Heart right ventricle (tissue), 16 donors: ENCODE measurements at regions of chrX and their contacts with region 1.

Region 1: GRCh38 chrX:129637217-129638109 is 17.3 kb downstream of the APLN start:
- DNase-seq: peak; percentile 67 to 72
- ATAC-seq: peak; percentile 46 to 86 (median 70)
- H3K4me3 ChIP-seq: no peak overlapping the region
- H3K27ac ChIP-seq: no peak overlapping the region
- H3K4me1 ChIP-seq: peaks cover 0 to 9% (median 0%) of the 10 kb centered on the region in 9 donors
- H3K27me3 ChIP-seq: no peaks in the 10 kb centered on the region
- CTCF ChIP-seq: peak; percentile 67 to 97 (median 84)

Region 2: GRCh38 chrX:129726307-129727111 is 89.0 kb after region 1 on chrX:
- intact Hi-C with region 1: loop called (anchors 1 to 5 kb)
- DNase-seq: peak; percentile 59 to 64
- ATAC-seq: peak in 7 of 8 donors; percentile 77 to 93 (median 88)
- H3K4me3 ChIP-seq: no peak overlapping the region
- H3K27ac ChIP-seq: no peak overlapping the region
- H3K4me1 ChIP-seq: no peaks in the 10 kb centered on the region
- H3K27me3 ChIP-seq: peaks cover 0 to 12% (median 0%) of the 10 kb centered on the region in 7 donors
- CTCF ChIP-seq: peak; percentile 44 to 78 (median 71)

Region 3: DNA sequence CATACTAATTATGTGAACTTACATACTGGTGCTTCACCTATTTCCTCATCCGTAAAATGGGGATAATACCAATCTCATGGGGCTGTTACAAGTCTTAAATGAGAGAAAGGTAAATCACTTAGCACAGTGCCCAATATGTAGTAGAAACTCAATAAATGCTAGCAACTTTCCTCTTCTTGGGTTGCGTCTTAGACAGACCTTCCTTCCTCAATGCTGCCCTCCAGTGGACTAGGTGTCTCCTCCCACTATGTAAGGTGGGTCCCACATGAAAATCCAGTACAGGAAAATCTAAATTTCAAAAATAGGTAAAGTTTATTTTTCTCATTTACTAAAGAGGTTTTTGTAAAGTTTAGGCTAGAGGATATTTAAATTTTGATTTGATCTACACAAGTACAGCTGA is 185.7 kb after region 1 on chrX:
- intact Hi-C with region 1: loop called in 1 of 10 experiments (anchors 10 kb)
- DNase-seq: peak in 1 of 2 donors; percentile 20
- ATAC-seq: no peak
- H3K4me3 ChIP-seq: no peak overlapping the region
- H3K27ac ChIP-seq: peak overlapping the region in 1 of 10 donors; percentile 23
- H3K4me1 ChIP-seq: no peaks in the 10 kb centered on the region
- H3K27me3 ChIP-seq: no peaks in the 10 kb centered on the region
- CTCF ChIP-seq: peak in 7 of 9 donors; percentile 48 to 67 (median 55)

Region 4: DNA sequence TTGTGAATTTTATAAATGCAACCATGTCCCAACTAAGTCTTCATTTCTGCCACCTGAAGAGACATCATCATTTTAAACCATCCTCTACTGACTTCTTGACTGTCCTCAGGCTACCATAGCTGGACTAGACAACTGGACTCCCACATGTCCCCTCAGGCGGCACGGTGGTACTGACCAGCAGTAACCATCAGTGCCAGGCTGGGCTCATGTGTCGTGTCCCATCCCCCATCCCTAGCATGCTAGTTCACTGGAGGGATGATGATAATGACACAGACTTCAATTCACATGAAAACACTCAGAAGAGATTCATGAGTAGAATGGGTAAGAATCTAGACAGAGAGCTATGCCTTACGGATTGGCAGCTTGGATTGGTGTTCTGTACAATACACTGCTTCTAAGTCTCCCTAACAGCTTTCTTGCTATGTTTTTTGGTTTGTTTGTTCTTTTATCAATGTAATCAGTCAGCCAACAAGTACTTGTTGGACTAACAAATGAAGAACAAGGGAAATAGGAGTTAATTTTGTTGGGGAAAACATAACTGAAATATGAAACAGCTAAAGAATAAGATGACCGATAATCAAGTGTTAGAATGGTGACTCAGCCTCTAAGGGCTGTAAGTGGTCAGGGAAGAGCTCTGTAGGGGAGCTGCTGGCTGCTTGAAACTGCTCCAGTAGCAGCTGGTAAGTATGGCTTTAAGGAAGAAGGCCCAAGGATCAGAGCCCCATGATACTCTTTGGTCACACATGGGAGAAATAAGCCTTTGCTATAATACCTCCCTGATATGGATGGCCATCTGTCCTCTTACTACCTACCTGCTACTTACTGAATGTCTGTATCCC is 195.9 kb after region 1 on chrX:
- intact Hi-C with region 1: loop called in 2 of 10 experiments (anchors 10 kb)
- DNase-seq: no peak
- ATAC-seq: peak in 1 of 8 donors; percentile 65
- H3K4me3 ChIP-seq: no peak overlapping the region
- H3K27ac ChIP-seq: no peak overlapping the region
- H3K4me1 ChIP-seq: peaks cover 0 to 4% (median 0%) of the 10 kb centered on the region in 9 donors
- H3K27me3 ChIP-seq: no peaks in the 10 kb centered on the region
- CTCF ChIP-seq: no peak

Region 5: DNA sequence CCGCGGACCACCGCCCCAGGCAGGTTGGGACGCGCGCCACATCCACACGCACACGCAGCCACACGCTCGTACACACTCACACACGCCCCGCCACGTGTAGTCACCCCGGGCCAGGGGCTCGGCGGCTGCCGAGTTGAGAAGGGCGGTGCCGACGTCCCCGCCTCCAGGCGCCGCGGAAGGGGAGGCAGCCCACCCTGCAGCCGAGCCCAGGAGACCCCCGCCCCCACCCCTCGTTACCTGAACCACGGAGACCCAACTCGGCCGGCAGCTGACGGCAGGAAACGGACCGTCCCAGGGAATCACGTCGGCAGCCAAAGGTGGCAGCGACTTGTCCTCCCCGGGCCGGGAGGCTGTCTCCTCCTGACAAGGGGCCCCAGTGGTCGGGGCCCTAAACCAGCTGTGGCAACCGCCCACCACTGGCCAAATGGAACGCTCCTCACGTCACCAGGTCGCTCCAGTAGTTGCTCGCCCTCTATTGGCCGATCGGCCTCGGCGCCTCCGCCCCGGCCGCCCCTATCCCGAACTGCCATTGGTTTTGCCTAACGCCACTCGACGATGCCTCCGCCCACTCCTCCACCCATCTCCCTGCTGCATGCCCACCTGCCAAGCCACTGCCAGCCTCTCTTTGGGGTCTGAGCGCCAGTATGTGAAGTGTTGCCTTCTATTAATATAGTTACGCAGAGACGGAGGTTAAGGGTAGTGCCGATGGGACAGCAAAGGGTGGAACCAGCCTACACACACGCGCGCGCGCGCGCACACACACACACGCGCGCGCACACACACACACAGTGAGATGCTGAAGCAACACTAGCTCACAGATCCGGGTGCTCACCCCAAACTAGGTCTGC is 206.2 kb after region 1 on chrX and contains the start of gene ZDHHC9:
- intact Hi-C with region 1: loop called in 2 of 10 experiments (anchors 10 kb)
- DNase-seq: peak; percentile 88 to 90
- ATAC-seq: peak; percentile 94 to 99 (median 97)
- H3K4me3 ChIP-seq: peak within 1 kb of the TSS; percentile 49 to 84 (median 70)
- H3K27ac ChIP-seq: peak within 1 kb of the TSS; percentile 13 to 83 (median 76)
- H3K4me1 ChIP-seq: peaks cover 0 to 12% (median 0%) of the 10 kb centered on the region in 9 donors
- H3K27me3 ChIP-seq: peaks cover 0 to 14% (median 0%) of the 10 kb centered on the region in 7 donors
- CTCF ChIP-seq: peak in 4 of 9 donors; percentile 2 to 25 (median 14)
- total RNA-seq, gene ZDHHC9: 8.3 to 22.8 (median 11.4) TPM